GM12878 (cell line): ENCODE measurements at regions of chr14 and their contacts with region 1.

Region 1: DNA sequence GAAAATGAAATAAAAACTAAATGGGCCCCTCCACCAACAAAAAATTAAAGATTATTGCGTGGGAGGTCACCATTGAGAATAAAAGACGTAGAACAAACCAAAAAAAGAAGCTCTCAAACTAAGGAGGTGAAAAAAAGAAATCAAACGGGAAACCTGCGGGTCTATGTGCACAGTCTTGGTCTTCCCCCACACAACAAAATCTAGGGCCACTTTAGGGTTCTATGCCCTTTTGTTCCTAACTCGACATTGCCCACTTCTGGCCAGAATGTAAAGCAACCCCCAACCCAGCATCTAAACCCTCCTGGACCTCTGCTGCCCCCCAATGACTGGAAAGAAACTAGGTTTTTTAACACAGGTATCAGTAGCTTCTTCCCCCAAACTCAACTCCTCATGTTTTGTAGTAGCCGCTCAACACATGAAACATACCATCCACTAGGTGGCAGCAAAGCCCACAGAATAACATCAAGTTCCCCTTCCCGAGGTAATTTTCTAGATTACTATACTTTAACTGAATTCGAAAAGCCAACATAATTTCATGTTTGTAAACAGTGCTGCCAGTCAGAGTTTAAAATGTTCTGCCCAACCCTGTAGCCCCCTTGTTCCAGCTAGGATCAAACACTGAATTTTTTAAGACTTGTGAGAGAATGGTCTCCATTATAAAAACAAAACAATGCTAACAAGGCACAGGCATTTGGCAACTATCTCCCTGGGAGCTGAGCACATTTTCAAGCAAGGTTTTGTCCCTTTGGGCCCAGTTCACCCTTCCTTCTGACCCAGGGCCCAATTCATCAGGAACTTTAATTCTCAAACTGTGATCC is 18.7 kb downstream of the DAD1 start:
- DNase-seq: peak; percentile 99
- ATAC-seq: peak; percentile 72
- H3K4me3 ChIP-seq: peak overlapping the region; percentile 30
- H3K27ac ChIP-seq: peak overlapping the region; percentile 97
- H3K4me1 ChIP-seq: peaks cover 43% of the 10 kb centered on the region
- H3K27me3 ChIP-seq: no peaks in the 10 kb centered on the region
- CTCF ChIP-seq: peak; percentile 98 to 100 (median 100); a peak in 5 of 6 replicates
- EP300 ChIP-seq: no peak
- POLR2A ChIP-seq: no peak
- RAD21 ChIP-seq: peak; percentile 99

Region 2: DNA sequence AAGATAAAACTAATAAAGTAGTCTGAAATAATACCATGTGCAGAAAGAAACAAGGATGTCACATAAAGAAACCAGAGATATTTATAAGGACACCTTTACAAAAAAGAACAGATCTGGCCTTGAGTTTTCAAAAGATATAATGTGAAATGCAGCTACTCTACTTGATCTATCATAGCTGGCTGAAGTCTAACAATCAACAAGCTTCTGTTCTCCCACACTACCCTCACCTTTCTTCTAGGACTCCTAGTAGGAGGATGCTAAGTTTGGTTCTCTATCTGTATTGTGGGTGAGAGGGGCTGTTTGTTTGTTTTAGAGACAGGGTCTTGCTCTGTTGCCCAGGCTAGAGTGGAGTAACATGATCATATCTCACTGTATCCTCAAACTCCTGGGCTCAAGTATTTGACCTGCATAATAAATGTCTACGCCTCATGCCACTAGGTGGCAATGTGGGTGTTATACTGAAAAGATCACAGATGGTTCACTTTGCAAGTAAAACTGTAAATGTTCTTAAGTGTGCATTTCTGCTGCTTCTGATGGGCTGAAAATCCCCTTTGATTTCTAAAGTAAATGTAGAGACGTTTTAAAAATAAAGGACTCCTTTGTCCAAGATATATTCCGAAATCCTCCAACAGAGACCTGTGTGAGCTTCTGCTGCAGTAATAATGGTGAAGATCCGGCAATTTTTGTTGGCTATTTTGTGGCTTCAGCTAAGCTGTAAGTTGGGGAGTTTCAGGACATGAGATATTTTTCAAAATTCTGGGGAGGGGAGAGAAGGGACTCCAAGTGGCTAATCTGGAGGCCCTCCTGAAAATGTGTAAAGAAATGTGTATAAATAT is 250.6 kb before region 1 on chr14:
- CTCF ChIA-PET with region 1: interaction called, 26 read pairs
- POLR2A ChIA-PET with region 1: no interaction called
- RAD21 ChIA-PET with region 1: interaction called, 17 read pairs
- SMC1A ChIA-PET with region 1: interaction called, 24 read pairs
- in situ Hi-C with region 1: loop called (anchors 5 kb)
- intact Hi-C with region 1: loop called (anchors 2 kb)
- DNase-seq: peak; percentile 42
- ATAC-seq: peak; percentile 97
- H3K4me3 ChIP-seq: no peak overlapping the region
- H3K27ac ChIP-seq: no peak overlapping the region
- H3K4me1 ChIP-seq: no peaks in the 10 kb centered on the region
- H3K27me3 ChIP-seq: no peaks in the 10 kb centered on the region
- CTCF ChIP-seq: peak; percentile 68 to 80 (median 73); a peak in 5 of 6 replicates
- EP300 ChIP-seq: no peak
- POLR2A ChIP-seq: no peak
- RAD21 ChIP-seq: peak; percentile 83

Region 3: GRCh38 chr14:22478670-22479069 is 91.7 kb before region 1 on chr14:
- CTCF ChIA-PET with region 1: interaction called, 236 read pairs
- POLR2A ChIA-PET with region 1: interaction called, 11 read pairs
- RAD21 ChIA-PET with region 1: interaction called, 171 read pairs
- SMC1A ChIA-PET with region 1: interaction called, 31 read pairs
- in situ Hi-C with region 1: no loop called
- intact Hi-C with region 1: loop called (anchors 1 kb)
- DNase-seq: no peak
- ATAC-seq: peak; percentile 5; the same call in 1 of the 3 replicates
- H3K4me3 ChIP-seq: peak overlapping the region; percentile 66; the same call in 1 of the 2 replicates
- H3K27ac ChIP-seq: peak overlapping the region; percentile 98
- H3K4me1 ChIP-seq: peaks cover 71% of the 10 kb centered on the region
- H3K27me3 ChIP-seq: no peaks in the 10 kb centered on the region
- CTCF ChIP-seq: no peak
- EP300 ChIP-seq: 0 out of 4 replicates have a peak, but pooled peaks of 1 of the 2 experiments have one; percentile 1
- POLR2A ChIP-seq: no peak
- RAD21 ChIP-seq: no peak

Region 4: GRCh38 chr14:22536853-22537338 is 33.4 kb before region 1 on chr14:
- CTCF ChIA-PET with region 1: interaction called, 10 read pairs
- POLR2A ChIA-PET with region 1: interaction called, 6 read pairs
- RAD21 ChIA-PET with region 1: interaction called, 18 read pairs
- SMC1A ChIA-PET with region 1: interaction called, 11 read pairs
- in situ Hi-C with region 1: no loop called
- intact Hi-C with region 1: no loop called
- DNase-seq: peak; percentile 94
- ATAC-seq: peak; percentile 75
- H3K4me3 ChIP-seq: peak overlapping the region; percentile 41; the same call in 1 of the 2 replicates
- H3K27ac ChIP-seq: peak overlapping the region; percentile 97
- H3K4me1 ChIP-seq: peaks cover 73% of the 10 kb centered on the region
- H3K27me3 ChIP-seq: no peaks in the 10 kb centered on the region
- CTCF ChIP-seq: no peak
- EP300 ChIP-seq: peak; percentile 75 to 82; a peak in 3 of 4 replicates
- POLR2A ChIP-seq: peak; percentile 59
- RAD21 ChIP-seq: peak; percentile 35; the same call in 1 of the 2 replicates

Region 5: DNA sequence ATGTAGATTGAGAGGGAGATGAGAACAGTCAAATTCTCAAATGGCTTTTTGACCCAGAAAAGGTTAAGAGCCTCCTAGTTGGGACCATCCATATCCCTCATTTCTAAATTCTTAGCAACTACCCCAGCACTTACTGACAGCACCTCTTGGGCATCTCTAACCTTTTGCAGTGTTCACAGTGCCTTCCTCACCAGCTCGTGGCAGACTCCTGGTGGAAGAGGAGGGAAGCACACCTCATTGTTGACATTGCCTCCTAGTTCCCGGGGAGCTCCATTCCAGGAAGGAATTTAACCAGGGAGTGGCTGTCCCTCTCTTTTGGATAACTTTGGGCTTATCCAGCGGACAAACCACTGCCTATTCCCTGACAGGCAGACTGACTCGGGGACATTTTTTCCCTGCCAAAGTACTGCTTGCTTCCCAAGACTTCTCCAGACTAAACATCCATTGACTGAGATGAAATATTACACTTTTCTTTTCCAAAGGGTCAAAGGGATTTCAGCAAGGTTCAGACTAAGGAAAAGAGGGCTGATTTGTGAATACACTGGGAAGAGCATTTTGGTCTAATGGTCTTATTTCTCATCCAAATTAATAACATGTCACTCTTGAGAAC is 82.8 kb after region 1 on chr14:
- CTCF ChIA-PET with region 1: interaction called, 206 read pairs
- POLR2A ChIA-PET with region 1: interaction called, 5 read pairs
- RAD21 ChIA-PET with region 1: interaction called, 116 read pairs
- SMC1A ChIA-PET with region 1: interaction called, 113 read pairs
- in situ Hi-C with region 1: loop called (anchors 5 kb)
- intact Hi-C with region 1: loop called (anchors 1 kb)
- DNase-seq: no peak
- ATAC-seq: peak; percentile 89
- H3K4me3 ChIP-seq: no peak overlapping the region
- H3K27ac ChIP-seq: no peak overlapping the region
- H3K4me1 ChIP-seq: no peaks in the 10 kb centered on the region
- H3K27me3 ChIP-seq: no peaks in the 10 kb centered on the region
- CTCF ChIP-seq: peak; percentile 87 to 92 (median 88)
- EP300 ChIP-seq: no peak
- POLR2A ChIP-seq: no peak
- RAD21 ChIP-seq: peak; percentile 91

Region 6: DNA sequence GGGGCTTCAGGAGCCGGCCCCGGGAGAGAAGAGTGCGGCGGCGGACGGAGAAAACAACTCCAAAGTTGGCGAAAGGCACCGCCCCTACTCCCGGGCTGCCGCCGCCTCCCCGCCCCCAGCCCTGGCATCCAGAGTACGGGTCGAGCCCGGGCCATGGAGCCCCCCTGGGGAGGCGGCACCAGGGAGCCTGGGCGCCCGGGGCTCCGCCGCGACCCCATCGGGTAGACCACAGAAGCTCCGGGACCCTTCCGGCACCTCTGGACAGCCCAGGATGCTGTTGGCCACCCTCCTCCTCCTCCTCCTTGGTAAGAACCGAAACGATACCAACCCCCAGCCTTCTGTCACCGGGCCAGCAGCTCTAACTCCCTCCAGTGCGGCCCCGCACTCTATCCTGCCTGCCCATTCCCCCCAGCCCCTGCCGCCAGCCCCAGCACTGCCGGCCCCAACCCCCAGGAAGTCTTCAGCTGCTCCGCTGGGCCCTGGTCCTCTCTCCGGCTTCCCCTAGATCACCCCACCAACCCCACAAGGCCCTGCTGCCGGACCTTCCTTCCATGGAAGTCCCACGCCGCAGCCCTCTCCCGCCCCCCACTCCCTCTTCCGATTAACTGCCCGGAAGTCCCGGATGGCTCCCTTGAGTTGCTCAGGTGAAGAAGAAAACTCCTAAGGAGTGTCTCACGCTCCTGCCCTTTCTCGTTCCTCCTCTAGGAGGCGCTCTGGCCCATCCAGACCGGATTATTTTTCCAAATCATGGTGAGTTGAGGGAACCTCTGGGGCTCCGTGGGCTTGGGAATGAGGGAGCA is 301.9 kb after region 1 on chr14:
- CTCF ChIA-PET with region 1: interaction called, 9 read pairs
- POLR2A ChIA-PET with region 1: no interaction called
- RAD21 ChIA-PET with region 1: interaction called, 11 read pairs
- SMC1A ChIA-PET with region 1: interaction called, 8 read pairs
- in situ Hi-C with region 1: no loop called
- intact Hi-C with region 1: no loop called
- DNase-seq: no peak
- ATAC-seq: peak; percentile 56
- H3K4me3 ChIP-seq: peak overlapping the region; percentile 74
- H3K27ac ChIP-seq: peak overlapping the region; percentile 93
- H3K4me1 ChIP-seq: peaks cover 8% of the 10 kb centered on the region
- H3K27me3 ChIP-seq: no peaks in the 10 kb centered on the region
- CTCF ChIP-seq: peak; percentile 95 to 98 (median 95)
- EP300 ChIP-seq: no peak
- POLR2A ChIP-seq: no peak
- RAD21 ChIP-seq: peak; percentile 75